ENCODE measurements at regions of chr2 and their contacts with region 1.

Region 1: GRCh38 chr2:128727914-128728313 is 409.2 kb upstream of the HS6ST1 start:
- DNase-seq: peak in 2 of 3 donors; percentile 63 to 72
- H3K4me3 ChIP-seq: no peak overlapping the region
- H3K27ac ChIP-seq: no peak overlapping the region
- H3K4me1 ChIP-seq: peaks cover 0 to 21% (median 8%) of the 10 kb centered on the region in 4 experiments
- H3K27me3 ChIP-seq: no peaks in the 10 kb centered on the region

Region 2: DNA sequence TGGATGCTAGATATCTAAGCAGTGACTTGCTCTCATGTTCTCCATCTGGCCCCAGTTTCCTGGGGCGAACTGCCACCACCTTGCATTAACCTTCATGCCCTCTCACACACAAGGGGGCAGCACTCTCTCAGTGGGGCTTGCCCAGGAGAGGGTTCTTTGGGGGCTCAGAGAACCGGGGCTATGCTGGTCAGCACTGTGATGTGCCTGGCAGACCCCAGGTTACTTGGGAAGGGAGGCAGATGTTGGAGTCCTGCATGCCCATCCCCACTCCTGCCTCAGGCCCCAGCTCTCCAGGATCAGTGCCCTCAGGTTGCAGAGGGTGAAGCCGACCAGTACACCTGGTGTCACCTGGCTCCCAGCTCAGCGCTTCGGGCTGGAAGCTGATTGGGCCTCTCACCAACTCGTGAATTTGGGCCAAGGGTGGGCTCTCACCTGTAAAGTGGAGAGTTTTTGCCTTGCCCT is 13.0 kb before region 1 on chr2:
- CTCF ChIA-PET with region 1: interaction called, 44 read pairs
- POLR2A ChIA-PET with region 1: no interaction called
- DNase-seq: peak; percentile 39 to 86 (median 82)
- H3K4me3 ChIP-seq: no peak overlapping the region
- H3K27ac ChIP-seq: peak overlapping the region in 1 of 2 experiments; percentile 20
- H3K4me1 ChIP-seq: peaks cover 12 to 58% (median 52%) of the 10 kb centered on the region in 4 experiments
- H3K27me3 ChIP-seq: no peaks in the 10 kb centered on the region